ENCODE measurements at regions of chr5 and their contacts with region 1.

Region 1: DNA sequence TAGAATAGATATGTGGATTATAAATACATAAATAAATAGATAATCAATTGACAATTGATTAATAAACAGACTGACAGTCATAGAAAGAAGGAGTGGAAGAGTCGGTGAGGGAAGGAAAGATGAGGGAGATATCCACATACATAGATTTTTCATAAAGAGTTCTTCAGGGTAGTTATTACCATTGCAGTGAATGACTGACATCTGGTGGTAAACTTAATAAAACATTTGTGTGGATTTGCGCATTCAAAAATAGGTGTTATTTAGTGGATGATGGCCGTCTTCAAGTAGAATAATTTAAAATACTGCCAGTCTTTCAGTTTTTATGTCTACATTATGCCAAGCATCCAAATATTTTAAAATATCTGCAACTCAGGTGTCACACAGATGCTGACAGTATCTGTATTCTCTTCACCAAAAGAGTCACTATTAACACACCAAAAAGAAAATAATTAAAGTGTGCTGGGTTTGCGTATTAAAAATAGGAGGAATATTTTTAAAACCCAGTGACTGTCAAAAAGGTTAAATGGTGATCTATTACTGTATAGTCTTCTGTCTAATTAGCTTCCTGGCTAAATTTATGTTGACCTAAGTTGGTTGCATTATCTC is 78.8 kb downstream of the GIN1 start:
- DNase-seq: peak; percentile 77
- H3K4me3 ChIP-seq: no peak overlapping the region
- H3K27ac ChIP-seq: no peak overlapping the region
- H3K4me1 ChIP-seq: peaks cover 5% of the 10 kb centered on the region
- H3K27me3 ChIP-seq: no peaks in the 10 kb centered on the region
- CTCF ChIP-seq: peak; percentile 63

Region 2: GRCh38 chr5:102536323-102536928 is 504.7 kb before region 1 on chr5:
- CTCF ChIA-PET with region 1: no interaction called
- POLR2A ChIA-PET with region 1: no interaction called
- intact Hi-C with region 1: loop called (anchors 2 kb)
- DNase-seq: peak; percentile 42
- H3K4me3 ChIP-seq: no peak overlapping the region
- H3K27ac ChIP-seq: no peak overlapping the region
- H3K4me1 ChIP-seq: no peaks in the 10 kb centered on the region
- H3K27me3 ChIP-seq: no peaks in the 10 kb centered on the region
- CTCF ChIP-seq: peak; percentile 63

Region 3: DNA sequence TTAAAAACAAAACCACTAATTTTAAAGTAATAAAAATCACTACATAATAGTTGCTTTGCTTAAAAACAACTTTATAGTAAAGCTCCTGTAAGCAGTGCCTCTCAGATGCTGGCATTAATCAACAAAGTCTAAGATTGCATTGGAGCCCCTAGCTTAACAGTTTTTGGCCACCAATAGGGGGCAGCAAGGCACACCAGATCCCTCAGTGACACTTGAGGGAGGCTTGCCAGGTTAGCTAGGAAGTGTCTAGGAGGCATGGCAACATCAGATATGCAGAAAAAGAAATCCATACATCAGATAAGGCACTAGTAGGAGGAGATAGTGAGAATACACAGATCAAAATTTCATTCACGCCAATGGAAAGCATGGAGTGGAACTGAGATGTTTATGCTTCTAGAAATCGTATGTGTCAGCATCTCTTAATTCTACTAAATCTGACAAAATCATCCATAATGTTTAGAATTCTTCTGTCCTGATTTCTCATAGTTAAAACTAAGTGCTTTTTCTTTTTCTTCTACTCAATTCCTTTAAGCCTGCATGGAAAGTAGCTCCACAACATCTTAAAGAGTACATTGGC is 359.7 kb before region 1 on chr5:
- CTCF ChIA-PET with region 1: interaction called, 3 read pairs
- POLR2A ChIA-PET with region 1: no interaction called
- intact Hi-C with region 1: loop called (anchors 2 kb)
- DNase-seq: peak; percentile 90
- H3K4me3 ChIP-seq: no peak overlapping the region
- H3K27ac ChIP-seq: no peak overlapping the region
- H3K4me1 ChIP-seq: no peaks in the 10 kb centered on the region
- H3K27me3 ChIP-seq: no peaks in the 10 kb centered on the region
- CTCF ChIP-seq: peak; percentile 97

Region 4: GRCh38 chr5:102946971-102947370 is 94.2 kb before region 1 on chr5:
- CTCF ChIA-PET with region 1: interaction called, 10 read pairs
- POLR2A ChIA-PET with region 1: no interaction called
- intact Hi-C with region 1: no loop called
- DNase-seq: no peak
- H3K4me3 ChIP-seq: no peak overlapping the region
- H3K27ac ChIP-seq: no peak overlapping the region
- H3K4me1 ChIP-seq: no peaks in the 10 kb centered on the region
- H3K27me3 ChIP-seq: no peaks in the 10 kb centered on the region
- CTCF ChIP-seq: no peak

Region 5: GRCh38 chr5:103057208-103058130 is 16.3 kb after region 1 on chr5:
- CTCF ChIA-PET with region 1: no interaction called
- POLR2A ChIA-PET with region 1: no interaction called
- intact Hi-C with region 1: no loop called
- DNase-seq: no peak
- H3K4me3 ChIP-seq: no peak overlapping the region
- H3K27ac ChIP-seq: no peak overlapping the region
- H3K4me1 ChIP-seq: no peaks in the 10 kb centered on the region
- H3K27me3 ChIP-seq: no peaks in the 10 kb centered on the region
- CTCF ChIP-seq: no peak

Region 6: DNA sequence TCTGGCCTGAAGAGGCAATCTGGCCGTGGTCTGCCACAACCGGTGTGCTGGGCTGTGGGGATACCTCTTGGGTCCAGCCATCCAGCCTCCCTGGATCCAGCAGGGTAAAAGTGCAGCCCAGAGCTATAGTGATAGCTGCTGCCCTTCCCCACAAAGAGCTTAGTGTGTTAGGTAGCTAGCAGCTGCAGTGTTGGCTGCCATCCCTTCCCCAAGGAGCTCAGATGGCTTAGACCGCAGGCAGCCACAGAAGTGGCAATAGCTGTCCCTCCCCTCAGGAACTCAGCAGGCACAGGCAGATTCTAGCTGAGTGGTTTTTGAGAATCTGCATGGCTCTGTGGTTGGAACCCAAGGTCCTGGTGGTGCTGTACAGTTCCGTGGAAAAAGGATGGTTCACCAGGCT is 38.6 kb after region 1 on chr5:
- CTCF ChIA-PET with region 1: no interaction called
- POLR2A ChIA-PET with region 1: no interaction called
- intact Hi-C with region 1: no loop called
- DNase-seq: no peak
- H3K4me3 ChIP-seq: no peak overlapping the region
- H3K27ac ChIP-seq: no peak overlapping the region
- H3K4me1 ChIP-seq: no peaks in the 10 kb centered on the region
- H3K27me3 ChIP-seq: no peaks in the 10 kb centered on the region
- CTCF ChIP-seq: no peak

Region 7: DNA sequence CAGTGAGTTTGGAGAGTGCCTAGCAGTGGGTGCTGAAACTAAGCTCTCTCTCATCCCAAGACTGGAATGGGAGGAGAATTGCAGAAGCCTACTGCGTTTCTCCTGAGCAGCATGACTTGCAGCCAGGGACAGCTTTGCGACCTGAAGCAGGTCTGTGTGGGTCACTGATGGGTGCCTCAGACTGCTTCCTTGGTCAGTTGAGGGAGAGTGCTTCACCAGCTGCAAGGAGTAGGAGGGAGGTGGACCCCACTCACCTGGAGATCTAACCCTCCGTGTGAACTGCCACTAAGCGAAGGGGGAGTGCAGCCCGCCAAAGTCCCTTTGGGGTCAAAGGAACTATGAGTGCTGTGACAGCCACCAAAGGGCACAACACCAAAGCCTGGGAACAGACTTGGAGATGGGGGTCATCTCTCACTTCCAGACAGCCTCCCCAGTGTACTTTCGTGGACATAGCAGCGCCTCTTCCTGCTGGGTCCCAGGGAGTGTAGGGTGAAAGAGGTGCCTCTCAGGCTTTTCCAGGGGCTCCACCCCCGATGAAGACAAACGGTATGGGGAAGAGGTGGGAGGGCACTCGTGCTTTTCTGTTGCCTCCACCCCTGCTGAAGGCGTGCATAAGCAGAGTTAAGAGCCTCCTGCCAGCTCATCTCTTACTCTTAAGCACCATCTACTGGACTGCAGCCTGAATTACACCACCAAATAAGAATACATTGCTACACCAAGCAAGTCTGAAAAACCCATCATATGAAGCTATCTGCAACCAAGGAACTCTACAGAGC is 183.1 kb after region 1 on chr5:
- CTCF ChIA-PET with region 1: no interaction called
- POLR2A ChIA-PET with region 1: no interaction called
- intact Hi-C with region 1: loop called (anchors 10 kb)
- DNase-seq: peak; percentile 87
- H3K4me3 ChIP-seq: peak overlapping the region; percentile 19
- H3K27ac ChIP-seq: no peak overlapping the region
- H3K4me1 ChIP-seq: peaks cover 3% of the 10 kb centered on the region
- H3K27me3 ChIP-seq: no peaks in the 10 kb centered on the region
- CTCF ChIP-seq: peak; percentile 83

Measured in A673 (cell line).